ENCODE measurements at regions of chr20 and their contacts with region 1.

Region 1: GRCh38 chr20:20824924-20825584 is 112.6 kb upstream of the RALGAPA2 start:
- DNase-seq: peak; percentile 46 to 78 (median 60)
- ATAC-seq: peak in 3 of 4 donors; percentile 68 to 82 (median 77)
- H3K4me3 ChIP-seq: no peak overlapping the region
- H3K27ac ChIP-seq: no peak overlapping the region
- H3K4me1 ChIP-seq: peaks cover 0 to 7% (median 0%) of the 10 kb centered on the region in 12 donors
- H3K27me3 ChIP-seq: peaks cover 0 to 20% (median 0%) of the 10 kb centered on the region in 9 donors
- CTCF ChIP-seq: peak; percentile 71 to 91 (median 88)
- POLR2A ChIP-seq: no peak

Region 2: GRCh38 chr20:20593447-20594170 is 231.4 kb before region 1 on chr20:
- intact Hi-C with region 1: loop called in 4 of 10 experiments (anchors 5 to 10 kb)
- DNase-seq: no peak
- ATAC-seq: peak; percentile 37 to 59 (median 46)
- H3K4me3 ChIP-seq: no peak overlapping the region
- H3K27ac ChIP-seq: no peak overlapping the region
- H3K4me1 ChIP-seq: peaks cover 0 to 13% (median 1%) of the 10 kb centered on the region in 12 donors
- H3K27me3 ChIP-seq: no peaks in the 10 kb centered on the region
- CTCF ChIP-seq: peak in 9 of 12 donors; percentile 4 to 55 (median 26)
- POLR2A ChIP-seq: no peak

Region 3: DNA sequence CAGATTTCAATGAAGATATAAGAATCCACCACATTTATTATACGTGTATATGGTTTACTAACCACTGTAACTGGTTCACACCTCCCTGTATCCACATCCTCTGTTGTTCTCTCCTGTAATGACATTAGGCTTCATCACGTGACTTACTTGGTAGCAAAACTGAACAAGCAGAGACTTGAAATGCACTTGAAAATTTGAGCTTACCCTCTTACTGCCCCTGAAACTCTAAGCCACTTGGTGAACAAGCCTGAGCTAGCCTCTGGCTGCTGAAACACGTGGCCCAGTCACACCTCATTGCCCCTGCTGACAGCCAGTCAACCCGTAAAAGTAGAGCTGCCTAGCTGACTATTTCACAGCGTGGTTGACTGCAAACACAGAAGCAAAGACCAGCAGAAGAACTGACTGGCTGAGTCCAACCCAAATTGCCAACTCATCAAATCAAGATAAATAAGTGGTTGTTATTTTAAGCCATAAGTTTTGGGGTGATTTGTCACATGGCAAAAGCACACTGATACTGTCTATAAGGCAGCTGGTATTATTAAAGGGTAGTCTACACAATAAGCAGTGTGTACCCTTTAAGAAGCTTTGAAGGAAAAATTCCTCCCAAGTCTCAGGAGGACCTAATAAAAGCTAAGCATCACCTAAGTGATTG is 221.6 kb before region 1 on chr20:
- intact Hi-C with region 1: loop called in 4 of 10 experiments (anchors 10 kb)
- DNase-seq: no peak
- ATAC-seq: no peak
- H3K4me3 ChIP-seq: no peak overlapping the region
- H3K27ac ChIP-seq: no peak overlapping the region
- H3K4me1 ChIP-seq: peaks cover 0 to 7% (median 0%) of the 10 kb centered on the region in 12 donors
- H3K27me3 ChIP-seq: no peaks in the 10 kb centered on the region
- CTCF ChIP-seq: no peak
- POLR2A ChIP-seq: no peak

Region 4: DNA sequence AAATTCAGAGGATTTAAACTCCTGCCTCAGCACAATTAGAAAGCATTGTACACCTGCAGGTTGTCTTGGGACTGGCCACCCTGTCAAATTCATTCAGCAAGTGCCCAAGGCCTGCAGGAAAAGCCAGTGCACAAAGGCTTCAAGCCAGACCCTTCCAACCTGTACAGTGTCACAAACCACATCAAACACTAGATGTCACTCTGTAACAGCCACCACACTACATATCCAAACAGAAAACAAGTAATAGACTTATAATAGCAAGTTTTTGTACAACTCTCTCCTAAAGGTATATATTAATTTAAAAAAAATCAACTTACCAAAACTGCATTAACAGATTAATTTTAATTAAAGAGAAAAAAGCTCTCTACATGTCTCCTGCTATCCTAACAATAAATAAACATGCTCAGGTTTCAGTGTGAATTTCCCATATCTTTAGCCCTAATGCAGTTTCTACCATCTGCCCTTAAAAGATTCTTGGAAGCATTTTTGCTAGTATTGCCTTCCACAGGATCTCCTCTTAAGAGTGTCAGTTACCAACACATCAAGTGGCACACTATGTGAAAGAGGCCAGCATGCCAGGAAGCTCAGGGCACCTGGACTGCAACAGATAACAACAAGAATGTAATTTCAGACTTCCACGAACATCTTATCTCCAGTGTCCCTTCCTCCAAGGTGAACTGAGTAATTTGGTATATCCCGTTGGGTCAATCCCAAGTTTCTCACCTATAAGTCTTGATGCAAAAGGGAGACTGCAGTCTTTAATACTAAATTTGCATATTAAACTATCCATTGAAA is 160.1 kb before region 1 on chr20:
- intact Hi-C with region 1: loop called (anchors 1 to 2 kb)
- DNase-seq: peak in 1 of 5 donors; percentile 18
- ATAC-seq: peak; percentile 85 to 92 (median 91)
- H3K4me3 ChIP-seq: no peak overlapping the region
- H3K27ac ChIP-seq: no peak overlapping the region
- H3K4me1 ChIP-seq: peaks cover 0 to 40% (median 19%) of the 10 kb centered on the region in 12 donors
- H3K27me3 ChIP-seq: no peaks in the 10 kb centered on the region
- CTCF ChIP-seq: peak; percentile 47 to 75 (median 64)
- POLR2A ChIP-seq: no peak

Region 5: GRCh38 chr20:20702330-20703245 is 122.5 kb before region 1 on chr20:
- intact Hi-C with region 1: loop called in 1 of 10 experiments (anchors 10 kb)
- DNase-seq: no peak
- ATAC-seq: no peak
- H3K4me3 ChIP-seq: no peak overlapping the region
- H3K27ac ChIP-seq: no peak overlapping the region
- H3K4me1 ChIP-seq: peaks cover 0 to 14% (median 5%) of the 10 kb centered on the region in 12 donors
- H3K27me3 ChIP-seq: no peaks in the 10 kb centered on the region
- CTCF ChIP-seq: no peak
- POLR2A ChIP-seq: no peak